ENCODE measurements at regions of chr10 and their contacts with region 1.

Region 1: DNA sequence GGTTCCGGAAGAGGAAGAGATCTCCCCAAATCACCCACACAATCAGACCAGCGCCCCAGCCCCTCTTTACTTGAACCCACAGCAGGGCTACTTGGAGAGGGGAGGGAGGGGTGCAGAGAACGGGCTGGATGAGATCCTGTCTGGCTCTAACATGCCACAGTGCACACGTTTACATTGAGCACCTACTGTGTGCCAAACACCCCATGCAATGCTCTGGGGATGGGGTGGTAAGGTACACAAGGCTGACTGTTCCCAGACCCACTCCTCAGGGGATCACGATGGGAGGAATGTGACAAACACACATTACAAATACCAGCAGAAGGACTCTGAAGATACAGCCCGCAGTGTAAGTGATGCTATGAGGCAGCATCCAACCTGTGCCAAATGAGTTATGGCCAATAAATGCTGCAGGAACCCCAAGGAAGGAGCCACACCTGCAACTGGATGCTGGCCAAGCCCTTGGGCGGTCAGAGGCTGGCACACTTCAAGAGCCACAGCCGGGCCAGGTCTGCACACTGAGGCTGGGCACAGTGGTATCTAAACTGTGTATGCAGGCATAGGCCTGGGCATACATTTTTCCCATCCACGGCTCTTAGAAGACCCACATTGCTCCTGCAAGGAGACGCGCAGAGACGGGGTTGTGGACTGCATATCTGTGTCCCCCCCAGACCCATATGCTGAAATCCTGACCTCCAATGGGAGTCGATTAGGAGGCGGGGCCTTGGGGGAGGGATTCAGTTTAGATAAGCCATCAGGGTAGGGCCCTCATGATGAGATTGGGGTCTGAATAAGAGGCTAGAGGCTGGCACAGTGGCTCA is 6.4 kb downstream of the SPOCK2 start:
- DNase-seq: peak in 2 of 35 experiments; percentile 7 to 13
- ATAC-seq: no peak
- H3K4me3 ChIP-seq: peak overlapping the region; percentile 7 to 21
- H3K4me3 Mint-ChIP-seq: peak overlapping the region; percentile 53 to 96 (median 96)
- H3K27ac ChIP-seq: peak overlapping the region; percentile 80
- H3K27ac Mint-ChIP-seq: peak overlapping the region; percentile 94 to 99
- H3K4me1 ChIP-seq: peaks cover 73 to 100% of the 10 kb centered on the region in 2 experiments
- H3K4me1 Mint-ChIP-seq: peaks cover 88 to 97% (median 94%) of the 10 kb centered on the region in 3 donors
- H3K27me3 ChIP-seq: no peaks in the 10 kb centered on the region
- H3K27me3 Mint-ChIP-seq: no peaks in the 10 kb centered on the region

Region 2: DNA sequence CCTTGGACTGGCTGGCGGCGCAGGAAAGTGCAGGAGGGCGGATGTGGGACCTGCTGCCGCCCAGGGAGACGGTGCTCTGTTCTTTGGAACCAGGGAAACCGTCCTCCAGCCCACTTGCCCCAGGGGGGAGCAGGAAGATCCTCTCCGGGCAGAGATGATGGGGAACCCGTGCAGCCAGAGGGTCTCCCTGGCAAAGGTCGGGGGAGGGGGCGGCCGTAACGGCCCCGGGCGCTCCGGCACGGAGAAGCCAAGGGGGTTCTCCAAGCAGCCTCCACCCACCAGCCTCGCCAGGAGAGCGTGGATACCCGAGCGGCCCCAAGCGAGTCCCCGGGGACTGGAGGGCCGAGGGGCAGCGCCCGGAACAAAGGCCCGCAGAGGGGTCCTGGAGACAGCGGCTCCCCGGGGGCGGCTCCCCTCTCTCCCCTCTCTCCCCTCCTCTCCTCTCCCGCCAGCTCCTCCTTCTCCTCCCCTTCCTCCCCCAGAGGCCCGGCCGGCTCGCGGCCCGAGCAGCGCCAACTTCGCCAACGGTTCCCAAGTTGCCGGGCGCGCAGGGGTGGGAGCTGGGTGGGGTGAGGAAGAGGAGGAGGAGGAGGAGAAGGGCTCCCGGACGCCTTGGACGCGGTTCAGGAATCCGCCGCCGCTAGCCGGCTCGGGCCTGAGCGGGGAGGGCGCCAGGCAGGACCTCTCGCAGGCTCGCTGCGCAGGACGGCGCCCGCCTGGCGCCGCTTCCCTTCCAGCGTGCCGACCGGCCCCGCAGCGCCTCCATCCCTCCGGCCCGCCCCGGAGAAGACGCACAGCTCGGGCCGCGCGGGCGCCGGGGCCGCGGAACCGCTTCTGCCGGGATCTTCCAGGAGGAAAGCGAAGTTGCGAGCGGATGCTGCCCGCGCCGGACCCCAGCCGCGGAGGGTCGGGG is 118.0 kb before region 1 on chr10 and contains the start of gene CHST3:
- CTCF ChIA-PET with region 1: interaction called in 1 of 2 experiments, 11 read pairs
- POLR2A ChIA-PET with region 1: no interaction called
- DNase-seq: peak in 2 of 35 experiments; percentile 6 to 11
- ATAC-seq: peak; percentile 40 to 64 (median 55)
- H3K4me3 ChIP-seq: peak within 1 kb of the TSS; percentile 7 to 58
- H3K4me3 Mint-ChIP-seq: peak within 1 kb of the TSS; percentile 58 to 79 (median 70)
- H3K27ac ChIP-seq: no peak within 1 kb of the TSS
- H3K27ac Mint-ChIP-seq: peak within 1 kb of the TSS in 1 of 2 donors; percentile 12
- H3K4me1 ChIP-seq: peaks cover 0 to 15% of the 10 kb centered on the region in 2 experiments
- H3K4me1 Mint-ChIP-seq: peaks cover 7 to 12% (median 11%) of the 10 kb centered on the region in 3 donors
- H3K27me3 ChIP-seq: peaks cover 9 to 55% of the 10 kb centered on the region in 2 experiments
- H3K27me3 Mint-ChIP-seq: peaks cover 40 to 55% of the 10 kb centered on the region in 2 donors
- total RNA-seq, gene CHST3: 0.09 to 0.10 (median 0.09) TPM in 3 of 5 donors, not detected in the others

Region 3: GRCh38 chr10:72026278-72027111 is 55.5 kb before region 1 on chr10:
- CTCF ChIA-PET with region 1: no interaction called
- POLR2A ChIA-PET with region 1: no interaction called
- DNase-seq: no peak
- ATAC-seq: no peak
- H3K4me3 ChIP-seq: no peak overlapping the region
- H3K4me3 Mint-ChIP-seq: no peak overlapping the region
- H3K27ac ChIP-seq: no peak overlapping the region
- H3K27ac Mint-ChIP-seq: no peak overlapping the region
- H3K4me1 ChIP-seq: no peaks in the 10 kb centered on the region
- H3K4me1 Mint-ChIP-seq: no peaks in the 10 kb centered on the region
- H3K27me3 ChIP-seq: peaks cover 0 to 29% of the 10 kb centered on the region in 2 experiments
- H3K27me3 Mint-ChIP-seq: peaks cover 3 to 10% of the 10 kb centered on the region in 2 donors

Measured in T-cell (primary cell).